H1 (cell line): ENCODE measurements at regions of chr12 and their contacts with region 1.

Region 1: GRCh38 chr12:119274636-119275065 is 59.9 kb upstream of the CCDC60 start:
- DNase-seq: peak; percentile 25 to 52
- H3K4me3 ChIP-seq: no peak overlapping the region
- H3K27ac ChIP-seq: no peak overlapping the region
- H3K4me1 ChIP-seq: peaks cover 4 to 14% (median 9%) of the 10 kb centered on the region in 4 experiments; a peak in 5 of 7 replicates
- H3K27me3 ChIP-seq: no peaks in the 10 kb centered on the region; a peak in 1 of 7 replicates
- CTCF ChIP-seq: peak; percentile 24 to 53 (median 48)
- EP300 ChIP-seq: no peak
- POLR2A ChIP-seq: no peak
- RAD21 ChIP-seq: peak; percentile 70 to 75

Region 2: DNA sequence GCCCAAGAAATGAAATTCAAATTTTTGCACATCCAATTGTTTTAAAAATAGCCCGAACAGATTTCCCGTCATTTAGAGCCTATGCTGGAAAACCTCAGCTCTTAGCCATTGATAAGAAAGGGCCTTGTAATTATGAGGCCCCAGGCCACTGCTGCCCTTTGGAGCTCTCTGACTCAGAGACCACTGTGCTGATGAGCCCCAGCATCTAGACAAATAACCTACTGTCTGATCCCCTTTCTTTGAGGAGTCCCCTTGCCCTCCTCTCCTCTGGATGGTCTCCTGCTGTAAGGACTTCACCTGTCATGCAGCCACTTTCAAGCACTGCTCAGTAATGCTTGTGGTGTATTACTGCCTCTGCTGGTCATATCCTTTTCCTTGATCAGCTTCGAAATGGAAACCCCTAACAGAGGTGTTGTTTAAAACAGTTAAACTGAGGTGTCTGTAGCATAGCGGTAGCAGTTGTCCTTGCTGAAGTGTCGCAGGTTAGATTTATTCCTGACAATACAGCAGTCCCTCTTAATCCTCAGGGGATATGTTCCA is 453.2 kb before region 1 on chr12:
- CTCF ChIA-PET with region 1: no interaction called
- POLR2A ChIA-PET with region 1: no interaction called
- DNase-seq: no peak
- H3K4me3 ChIP-seq: no peak overlapping the region
- H3K27ac ChIP-seq: no peak overlapping the region
- H3K4me1 ChIP-seq: peaks cover 0 to 4% (median 2%) of the 10 kb centered on the region in 4 experiments; a peak in 1 of 7 replicates
- H3K27me3 ChIP-seq: no peaks in the 10 kb centered on the region
- CTCF ChIP-seq: peak in 2 of 3 experiments; percentile 62 to 69; a peak in 3 of 4 replicates
- EP300 ChIP-seq: no peak
- POLR2A ChIP-seq: no peak
- RAD21 ChIP-seq: peak; percentile 67 to 76

Region 3: DNA sequence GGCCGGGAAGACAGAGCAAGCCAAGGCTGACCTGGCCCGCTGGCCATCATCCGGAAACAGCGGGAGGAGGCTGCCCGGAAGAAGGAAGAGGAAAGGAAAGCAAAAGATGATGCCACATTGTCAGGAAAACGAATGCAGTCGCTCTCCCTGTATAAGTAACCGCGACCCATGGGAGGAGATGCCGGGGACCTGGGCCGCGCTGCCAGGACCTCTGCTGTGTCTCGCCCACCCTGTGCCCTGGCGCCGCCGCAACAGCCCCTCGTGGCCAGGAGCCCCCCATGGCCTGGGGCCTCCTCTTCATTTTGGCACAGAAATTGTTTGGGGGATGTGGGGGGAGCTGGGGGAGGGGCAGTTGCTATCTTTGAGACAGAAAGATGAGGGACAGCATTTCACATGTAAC is 79.4 kb before region 1 on chr12:
- CTCF ChIA-PET with region 1: no interaction called
- POLR2A ChIA-PET with region 1: no interaction called
- DNase-seq: no peak
- H3K4me3 ChIP-seq: no peak overlapping the region
- H3K27ac ChIP-seq: no peak overlapping the region
- H3K4me1 ChIP-seq: peaks cover 0 to 4% (median 0%) of the 10 kb centered on the region in 4 experiments; a peak in 4 of 7 replicates
- H3K27me3 ChIP-seq: no peaks in the 10 kb centered on the region; a peak in 1 of 7 replicates
- CTCF ChIP-seq: no peak
- EP300 ChIP-seq: no peak
- POLR2A ChIP-seq: no peak
- RAD21 ChIP-seq: no peak

Region 4: DNA sequence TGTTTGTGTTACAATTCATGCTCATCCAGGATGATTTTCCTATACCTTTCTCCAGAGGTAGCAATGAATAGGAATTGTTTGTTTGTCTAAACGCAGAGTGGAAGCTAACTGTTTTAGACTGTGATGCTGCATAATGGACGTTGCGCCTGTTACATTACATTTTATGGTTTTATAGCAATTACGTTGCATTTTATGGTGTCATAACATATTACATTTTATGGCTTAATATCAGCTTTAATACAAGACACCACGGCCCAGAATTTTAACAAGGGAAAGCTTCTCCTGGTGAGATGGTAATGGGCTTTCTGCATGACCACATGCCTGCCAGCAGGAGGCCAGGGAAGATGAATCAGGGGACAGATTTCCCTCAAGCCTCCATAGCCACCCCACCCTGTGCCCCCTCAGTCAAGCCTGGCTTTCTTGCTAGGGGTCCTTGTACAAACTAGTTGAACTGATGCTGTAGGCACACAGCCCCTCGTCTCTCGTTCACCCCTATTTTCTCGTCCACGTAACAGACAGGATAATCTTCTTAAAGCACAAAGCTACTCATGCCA is 39.4 kb before region 1 on chr12:
- CTCF ChIA-PET with region 1: interaction called, 14 read pairs
- POLR2A ChIA-PET with region 1: no interaction called
- DNase-seq: no peak
- H3K4me3 ChIP-seq: no peak overlapping the region
- H3K27ac ChIP-seq: peak overlapping the region; percentile 5; the same call in 1 of the 2 replicates
- H3K4me1 ChIP-seq: peaks cover 10 to 28% (median 25%) of the 10 kb centered on the region in 4 experiments; a peak in 6 of 7 replicates
- H3K27me3 ChIP-seq: no peaks in the 10 kb centered on the region; a peak in 1 of 7 replicates
- CTCF ChIP-seq: peak; percentile 28 to 68 (median 58)
- EP300 ChIP-seq: no peak
- POLR2A ChIP-seq: no peak
- RAD21 ChIP-seq: peak; percentile 26 to 38; a peak in 2 of 4 replicates

Region 5: DNA sequence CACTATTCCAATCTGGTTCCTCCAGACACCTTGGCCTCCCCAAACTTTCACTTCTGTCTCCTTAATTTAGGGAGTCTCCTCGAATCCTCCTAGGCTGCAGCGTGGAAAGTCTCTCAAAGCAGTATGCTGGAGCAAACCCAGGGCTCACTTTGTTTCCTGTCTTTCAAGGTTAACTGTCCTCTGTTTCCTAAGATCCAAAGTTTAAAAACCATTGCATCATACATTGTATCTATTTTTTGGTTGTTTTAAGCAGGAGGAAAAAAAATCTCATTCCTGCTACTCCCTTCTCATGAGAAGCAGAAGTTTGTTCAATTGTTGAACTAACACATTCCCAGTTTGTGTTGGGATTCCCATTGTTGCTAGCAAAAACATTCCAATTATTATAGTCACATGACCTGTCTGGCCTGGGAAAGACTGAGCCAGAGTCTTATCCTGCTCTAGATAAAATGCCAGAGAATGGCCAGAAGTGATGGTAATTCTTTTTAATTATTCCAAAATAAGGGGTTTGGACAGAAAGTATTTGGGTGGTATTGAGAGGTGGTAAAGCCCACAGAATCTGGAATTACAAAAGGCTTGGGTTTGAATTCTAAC is 28.7 kb before region 1 on chr12:
- CTCF ChIA-PET with region 1: no interaction called
- POLR2A ChIA-PET with region 1: no interaction called
- DNase-seq: no peak
- H3K4me3 ChIP-seq: no peak overlapping the region
- H3K27ac ChIP-seq: no peak overlapping the region
- H3K4me1 ChIP-seq: peaks cover 0 to 3% (median 0%) of the 10 kb centered on the region in 4 experiments; a peak in 1 of 7 replicates
- H3K27me3 ChIP-seq: no peaks in the 10 kb centered on the region
- CTCF ChIP-seq: no peak
- EP300 ChIP-seq: no peak
- POLR2A ChIP-seq: no peak
- RAD21 ChIP-seq: no peak

Region 6: DNA sequence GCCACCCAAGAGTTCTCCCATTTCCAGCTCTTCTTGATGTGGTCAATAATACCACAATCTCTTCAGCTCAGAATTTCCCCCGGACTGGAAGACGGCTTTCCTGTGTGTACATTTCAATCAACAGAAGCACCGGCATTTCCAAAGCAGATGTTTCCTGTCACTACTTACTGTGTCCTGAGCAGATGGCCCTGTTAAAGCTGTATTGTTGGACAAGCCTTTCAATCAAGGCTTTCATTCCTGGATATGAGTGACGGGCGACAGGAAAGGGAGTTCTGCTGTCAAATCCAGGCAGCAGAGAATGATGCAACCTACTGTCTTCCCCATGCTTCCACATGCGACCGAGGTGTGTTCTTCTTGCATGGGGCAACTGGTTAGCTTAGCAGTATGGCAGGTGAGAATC is 16.5 kb before region 1 on chr12:
- CTCF ChIA-PET with region 1: interaction called, 10 read pairs
- POLR2A ChIA-PET with region 1: no interaction called
- DNase-seq: no peak
- H3K4me3 ChIP-seq: no peak overlapping the region
- H3K27ac ChIP-seq: no peak overlapping the region
- H3K4me1 ChIP-seq: no peaks in the 10 kb centered on the region; a peak in 1 of 7 replicates
- H3K27me3 ChIP-seq: peaks cover 0 to 2% (median 0%) of the 10 kb centered on the region in 4 experiments; a peak in 1 of 7 replicates
- CTCF ChIP-seq: no peak
- EP300 ChIP-seq: no peak
- POLR2A ChIP-seq: no peak
- RAD21 ChIP-seq: no peak

Region 7: DNA sequence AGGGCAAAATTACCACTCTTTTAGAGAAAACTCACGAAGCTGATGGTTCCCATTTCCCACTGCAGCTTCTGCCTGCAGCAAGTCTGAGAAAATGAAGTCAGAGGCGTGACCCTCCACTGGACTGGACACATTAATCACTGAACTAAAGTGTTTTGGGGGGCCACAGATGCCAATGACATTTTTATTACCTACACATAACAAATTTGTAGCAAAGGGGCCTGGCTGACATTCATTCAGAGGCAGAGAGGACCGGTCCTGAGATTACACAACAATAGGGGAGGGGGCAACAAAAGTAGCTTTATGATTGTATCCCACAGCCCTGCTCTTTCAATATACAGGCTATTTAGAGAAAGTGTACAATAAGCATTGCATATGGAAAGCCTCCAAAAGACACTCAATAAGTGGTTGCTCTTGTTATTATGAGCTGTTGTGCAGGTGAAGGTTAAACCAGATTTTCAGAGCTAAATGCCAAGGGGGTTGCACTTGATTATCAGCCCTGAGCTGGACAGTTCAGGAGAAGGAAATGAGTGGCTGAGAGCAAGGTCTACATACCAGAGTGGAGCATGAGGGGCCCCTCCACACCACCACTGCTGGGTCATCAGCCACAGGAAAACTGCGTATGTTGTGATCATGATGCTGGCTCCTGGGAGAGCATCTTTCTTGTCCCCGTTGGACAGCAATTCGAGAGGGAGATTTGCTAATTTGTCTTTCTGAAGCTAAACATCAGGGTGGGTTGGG is 18.4 kb after region 1 on chr12:
- CTCF ChIA-PET with region 1: interaction called, 11 read pairs
- POLR2A ChIA-PET with region 1: no interaction called
- DNase-seq: no peak
- H3K4me3 ChIP-seq: no peak overlapping the region
- H3K27ac ChIP-seq: no peak overlapping the region
- H3K4me1 ChIP-seq: no peaks in the 10 kb centered on the region
- H3K27me3 ChIP-seq: no peaks in the 10 kb centered on the region
- CTCF ChIP-seq: no peak
- EP300 ChIP-seq: no peak
- POLR2A ChIP-seq: no peak
- RAD21 ChIP-seq: no peak

Region 8: DNA sequence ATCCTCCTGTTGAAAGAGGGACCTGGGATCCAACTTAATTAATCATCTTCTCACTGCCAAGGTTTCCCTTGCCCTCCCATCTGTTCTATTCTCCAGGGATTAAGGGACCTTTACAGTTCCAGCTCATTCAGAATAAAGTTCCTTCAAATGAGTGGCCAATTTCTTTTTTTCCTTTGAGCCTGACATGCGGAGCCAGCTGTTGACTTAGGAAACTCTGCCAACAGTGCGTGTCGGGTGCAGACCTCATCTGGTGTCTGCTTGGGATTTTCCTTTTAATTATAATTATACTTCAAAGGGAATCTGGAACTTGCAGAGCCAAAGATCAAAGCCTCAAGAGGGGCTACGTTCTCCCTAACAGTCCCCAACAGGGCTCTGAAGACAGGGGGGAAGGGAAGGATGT is 124.7 kb after region 1 on chr12:
- CTCF ChIA-PET with region 1: no interaction called
- POLR2A ChIA-PET with region 1: no interaction called
- DNase-seq: no peak
- H3K4me3 ChIP-seq: no peak overlapping the region
- H3K27ac ChIP-seq: no peak overlapping the region
- H3K4me1 ChIP-seq: no peaks in the 10 kb centered on the region
- H3K27me3 ChIP-seq: no peaks in the 10 kb centered on the region
- CTCF ChIP-seq: no peak
- EP300 ChIP-seq: no peak
- POLR2A ChIP-seq: no peak
- RAD21 ChIP-seq: no peak